ENCODE measurements at regions of chr16 and their contacts with region 1.

Region 1: DNA sequence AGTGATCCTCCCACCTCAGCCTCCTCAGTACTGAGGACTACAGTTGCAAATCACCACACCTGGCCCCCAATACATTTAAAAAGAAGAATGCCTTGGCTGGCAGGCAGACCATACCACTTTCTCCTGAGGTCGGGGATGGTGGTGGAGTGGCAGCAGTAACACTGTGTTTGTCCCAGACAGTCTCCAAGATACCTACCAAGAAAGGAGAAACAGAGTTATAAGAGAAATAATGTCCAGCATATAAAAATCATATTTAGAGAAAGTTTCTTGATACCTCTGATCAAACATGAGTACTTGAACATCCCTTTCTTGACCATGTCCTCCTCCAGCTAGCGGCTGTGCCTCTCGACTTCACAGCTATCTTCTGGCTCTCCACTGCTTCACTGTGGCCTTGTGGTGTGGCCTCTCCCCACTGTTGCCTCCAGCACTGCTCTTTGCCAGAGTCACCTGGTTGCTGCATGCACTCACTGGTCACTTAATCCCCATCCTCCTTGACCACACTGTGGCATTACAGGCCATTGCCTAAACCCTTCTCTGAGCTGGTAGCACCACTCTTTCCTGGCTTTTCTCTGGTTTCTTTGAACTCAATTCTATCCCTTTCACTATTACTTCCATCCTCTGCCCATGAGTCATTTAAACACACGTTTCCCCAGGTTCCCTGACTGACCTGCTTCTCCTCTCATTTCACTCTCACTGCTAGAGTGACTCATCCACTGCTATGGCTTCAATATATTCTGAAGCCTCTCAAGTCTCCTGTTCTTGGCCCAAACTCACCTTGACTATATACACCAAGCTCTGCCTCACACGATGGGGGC is 45.2 kb downstream of the XPO6 start:
- DNase-seq: peak; percentile 80
- ATAC-seq: peak; percentile 98
- H3K4me3 ChIP-seq: no peak overlapping the region
- H3K27ac ChIP-seq: peak overlapping the region; percentile 57
- H3K4me1 ChIP-seq: peaks cover 20% of the 10 kb centered on the region
- H3K27me3 ChIP-seq: no peaks in the 10 kb centered on the region
- CTCF ChIP-seq: no peak

Region 2: GRCh38 chr16:28183367-28183766 is 16.8 kb after region 1 on chr16:
- CTCF ChIA-PET with region 1: no interaction called
- POLR2A ChIA-PET with region 1: interaction called, 20 read pairs
- intact Hi-C with region 1: no loop called
- DNase-seq: no peak
- ATAC-seq: no peak
- H3K4me3 ChIP-seq: no peak overlapping the region
- H3K27ac ChIP-seq: no peak overlapping the region
- H3K4me1 ChIP-seq: peaks cover 12% of the 10 kb centered on the region
- H3K27me3 ChIP-seq: no peaks in the 10 kb centered on the region
- CTCF ChIP-seq: no peak

Region 3: DNA sequence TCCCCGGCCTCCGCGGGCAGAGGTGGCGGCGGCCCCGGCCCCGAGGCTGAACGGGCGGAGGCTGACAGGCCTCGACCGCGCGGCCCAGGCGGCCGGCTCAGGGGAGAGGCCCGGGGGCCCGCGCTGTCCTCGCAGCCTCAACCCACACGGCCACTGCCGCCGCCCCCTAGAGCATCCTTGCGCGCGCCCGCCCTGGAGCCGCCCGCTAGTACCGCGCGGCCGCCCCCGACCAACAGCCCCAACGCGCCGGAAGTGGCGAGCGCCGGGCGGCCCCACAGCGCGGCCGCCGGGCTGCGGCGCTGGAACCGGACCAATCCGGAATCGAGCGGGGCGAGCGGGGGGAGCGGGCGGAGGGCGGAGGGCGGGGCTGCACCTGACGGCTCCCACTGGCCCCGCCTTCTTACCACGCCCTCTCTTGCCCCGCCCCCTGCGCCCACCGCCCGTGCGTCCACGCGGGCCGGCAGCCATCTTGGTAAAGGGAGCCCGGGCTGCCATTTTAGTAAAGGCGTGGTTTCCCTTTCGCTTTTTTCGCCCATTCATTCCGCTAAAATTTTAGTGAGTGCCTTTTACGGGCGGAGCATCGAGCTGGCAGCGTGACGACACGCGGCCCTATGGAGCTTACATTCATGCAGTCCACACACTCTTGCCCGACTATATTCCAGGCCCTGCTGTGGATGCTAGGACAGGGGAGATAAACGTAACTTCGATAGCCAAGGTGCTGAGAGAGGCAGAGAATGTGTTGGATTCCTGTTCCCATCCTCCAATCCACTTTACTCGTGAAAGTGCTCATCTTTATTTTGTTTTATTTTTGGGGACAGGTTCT is 45.3 kb after region 1 on chr16 and contains the start of gene XPO6:
- CTCF ChIA-PET with region 1: no interaction called
- POLR2A ChIA-PET with region 1: no interaction called
- intact Hi-C with region 1: loop called (anchors 5 kb)
- DNase-seq: peak; percentile 86
- ATAC-seq: peak; percentile 68
- H3K4me3 ChIP-seq: peak within 1 kb of the TSS; percentile 98
- H3K27ac ChIP-seq: peak within 1 kb of the TSS; percentile 57
- H3K4me1 ChIP-seq: peaks cover 32% of the 10 kb centered on the region
- H3K27me3 ChIP-seq: no peaks in the 10 kb centered on the region
- CTCF ChIP-seq: no peak
- total RNA-seq, gene XPO6: 106 and 110 TPM in 2 replicates

Measured in PC-3 (cell line).